ENCODE measurements at regions of chr16 and their contacts with region 1.

Region 1: GRCh38 chr16:68146585-68146984 is 61.4 kb downstream of the NFATC3 start:
- DNase-seq: no peak
- H3K4me3 ChIP-seq: no peak overlapping the region
- H3K27ac ChIP-seq: no peak overlapping the region
- H3K4me1 ChIP-seq: peaks cover 17% of the 10 kb centered on the region
- H3K27me3 ChIP-seq: no peaks in the 10 kb centered on the region
- CTCF ChIP-seq: no peak

Region 2: DNA sequence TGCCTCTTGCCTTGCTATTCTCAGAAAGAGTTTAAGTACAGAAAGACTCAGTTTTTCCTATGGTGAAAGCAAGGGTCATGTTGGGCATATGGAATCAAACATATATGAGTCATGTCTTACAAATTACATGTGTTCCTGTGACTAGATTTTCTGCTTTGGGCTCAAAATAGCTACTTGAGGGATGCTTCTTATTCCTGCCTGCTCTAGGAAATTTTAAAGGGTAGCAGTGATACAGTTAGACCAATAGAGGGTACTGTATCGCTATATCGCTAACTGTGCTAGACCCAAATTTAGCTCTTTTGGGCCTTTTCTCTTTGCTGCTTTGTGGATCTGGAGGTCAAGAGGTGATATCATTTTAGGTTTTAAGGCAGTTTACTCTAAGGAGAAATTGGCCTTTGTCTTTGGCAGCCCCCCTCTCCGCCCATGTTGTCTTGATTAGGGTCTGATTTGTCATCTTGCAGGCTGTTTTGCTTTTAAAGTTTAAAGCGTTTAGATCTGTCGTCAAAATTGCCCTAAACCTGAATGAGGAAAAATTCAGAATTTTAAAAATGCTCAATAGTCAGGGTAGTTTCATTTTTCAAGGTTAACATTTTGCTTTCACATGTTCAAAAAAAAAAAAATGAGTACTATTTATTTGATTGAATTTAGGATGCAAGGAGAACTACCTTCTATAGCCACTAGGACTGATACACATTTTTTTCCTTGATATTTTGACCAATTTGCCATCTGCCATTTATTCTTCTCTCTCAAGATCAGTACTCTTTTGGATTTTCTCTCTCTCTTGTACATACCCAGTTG is 52.6 kb before region 1 on chr16:
- CTCF ChIA-PET with region 1: no interaction called
- dilution Hi-C with region 1: loop called (anchors 5 kb)
- in situ Hi-C with region 1: no loop called
- intact Hi-C with region 1: no loop called
- DNase-seq: peak; percentile 12
- H3K4me3 ChIP-seq: no peak overlapping the region
- H3K27ac ChIP-seq: peak overlapping the region; percentile 7
- H3K4me1 ChIP-seq: peaks cover 43% of the 10 kb centered on the region
- H3K27me3 ChIP-seq: no peaks in the 10 kb centered on the region
- CTCF ChIP-seq: peak; percentile 35 to 36

Region 3: DNA sequence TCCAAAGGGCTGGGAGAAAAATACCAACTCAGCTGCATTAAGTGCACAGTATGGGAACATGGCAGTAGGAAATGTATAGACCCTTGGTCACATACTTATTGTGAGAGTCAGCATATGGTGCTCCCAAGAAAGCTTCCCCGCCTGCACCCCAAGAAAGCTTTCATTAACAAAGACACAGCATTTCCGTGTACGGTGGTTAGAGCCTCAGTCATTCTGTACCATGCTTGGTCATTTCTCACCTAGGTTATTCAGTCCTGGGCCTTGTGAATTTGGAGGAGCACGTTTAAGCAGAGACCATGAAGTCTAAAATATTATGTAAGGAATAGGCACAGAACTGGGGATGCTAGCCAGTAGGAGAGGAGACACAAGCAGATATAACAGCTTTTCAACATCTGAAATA is 33.3 kb after region 1 on chr16:
- CTCF ChIA-PET with region 1: no interaction called
- dilution Hi-C with region 1: loop called (anchors 5 kb)
- in situ Hi-C with region 1: no loop called
- intact Hi-C with region 1: no loop called
- DNase-seq: no peak
- H3K4me3 ChIP-seq: no peak overlapping the region
- H3K27ac ChIP-seq: no peak overlapping the region
- H3K4me1 ChIP-seq: no peaks in the 10 kb centered on the region
- H3K27me3 ChIP-seq: no peaks in the 10 kb centered on the region
- CTCF ChIP-seq: no peak

Region 4: DNA sequence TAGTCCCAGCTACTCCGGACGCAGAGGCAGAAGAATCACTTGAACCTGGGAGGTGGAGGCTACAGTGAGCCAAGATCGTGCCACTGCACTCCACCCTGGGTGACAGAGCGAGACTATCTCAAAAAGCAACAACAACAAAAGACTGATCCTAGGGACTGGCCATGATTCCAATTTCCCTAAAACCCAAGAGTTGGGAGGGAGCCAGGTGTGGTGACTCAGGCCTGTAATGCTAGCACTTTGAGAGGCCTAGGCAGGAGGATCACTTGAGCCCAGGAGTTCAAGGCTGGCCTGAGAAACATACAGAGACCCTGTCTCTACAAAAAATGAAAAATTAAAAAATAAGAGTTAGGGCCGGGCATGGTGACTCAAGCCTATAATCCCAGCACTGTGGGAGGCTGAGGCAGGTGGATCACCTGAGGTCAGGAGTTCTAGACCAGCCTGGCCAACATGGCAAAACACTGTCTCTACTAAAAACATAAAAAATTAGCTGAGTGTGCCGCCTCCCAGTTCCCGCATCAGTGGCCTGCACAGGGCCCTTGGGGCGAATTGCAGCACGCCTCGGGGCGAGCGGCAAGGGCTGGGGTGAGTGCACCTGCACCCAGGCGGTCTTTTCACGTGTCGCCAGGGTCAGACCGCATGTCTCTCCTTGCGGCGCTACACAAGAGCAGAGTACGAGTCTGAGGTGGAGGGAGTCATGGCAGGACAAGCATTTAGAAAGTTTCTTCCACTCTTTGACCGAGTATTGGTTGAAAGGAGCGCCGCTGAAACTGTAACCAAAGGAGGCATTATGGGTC is 539.3 kb after region 1 on chr16:
- CTCF ChIA-PET with region 1: no interaction called
- dilution Hi-C with region 1: no loop called
- in situ Hi-C with region 1: no loop called
- intact Hi-C with region 1: no loop called
- DNase-seq: peak; percentile 61
- H3K4me3 ChIP-seq: no peak overlapping the region
- H3K27ac ChIP-seq: no peak overlapping the region
- H3K4me1 ChIP-seq: no peaks in the 10 kb centered on the region
- H3K27me3 ChIP-seq: no peaks in the 10 kb centered on the region
- CTCF ChIP-seq: no peak